HCT116 (cell line): ENCODE measurements at regions of chr7 and their contacts with region 1.

Region 1: GRCh38 chr7:24665564-24666294 is 91.5 kb downstream of the GSDME start:
- DNase-seq: peak; percentile 27
- ATAC-seq: peak; percentile 78
- H3K4me3 ChIP-seq: no peak overlapping the region
- H3K27ac ChIP-seq: no peak overlapping the region
- H3K4me1 ChIP-seq: 0 out of 4 replicates have a peak, but pooled peaks cover 0 to 7% of the 10 kb centered on the region in 2 experiments
- H3K27me3 ChIP-seq: no peaks in the 10 kb centered on the region
- CTCF ChIP-seq: peak; percentile 57 to 78 (median 58); a peak in 5 of 6 replicates
- POLR2A ChIP-seq: no peak
- RAD21 ChIP-seq: peak; percentile 76

Region 2: DNA sequence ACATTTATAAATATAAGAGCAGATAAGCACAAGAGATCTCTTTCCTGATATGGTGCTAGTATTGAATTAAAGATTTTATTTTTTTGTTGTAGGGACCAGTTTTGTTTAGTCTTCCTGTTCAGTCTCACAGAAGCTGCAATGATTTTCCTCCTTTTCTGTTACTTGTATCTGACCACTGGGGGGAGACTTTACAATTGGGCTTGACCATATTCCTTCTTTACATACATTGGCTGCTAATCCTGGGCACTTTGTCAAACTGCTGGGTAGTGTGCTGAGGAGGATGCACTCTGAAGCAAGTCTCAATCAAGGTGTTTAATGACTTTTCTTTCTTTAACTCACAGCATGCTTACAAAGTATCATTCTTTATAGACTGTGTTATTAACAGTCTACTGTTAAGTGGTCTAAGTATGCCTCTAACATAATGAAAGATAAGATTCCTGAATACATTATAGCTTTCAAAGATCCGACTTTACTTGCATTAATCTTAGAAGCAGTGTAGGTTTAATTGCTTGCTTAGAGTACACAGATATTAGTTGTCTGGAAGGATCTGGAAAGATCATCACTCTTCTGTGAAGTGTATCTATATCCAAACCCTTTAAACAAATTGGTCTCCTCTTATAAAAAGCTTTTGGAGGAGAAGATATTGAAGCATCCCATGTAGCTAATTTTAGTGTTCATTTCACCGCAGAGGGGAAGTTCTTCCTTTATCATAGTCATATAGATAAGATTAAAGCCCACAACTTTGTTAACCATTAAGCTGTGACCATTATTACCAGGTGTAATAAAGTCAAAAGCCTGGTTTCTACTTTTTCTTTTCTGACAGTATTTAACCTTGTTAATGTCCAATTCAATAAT is 89.3 kb before region 1 on chr7:
- CTCF ChIA-PET with region 1: interaction called, 6 read pairs
- POLR2A ChIA-PET with region 1: no interaction called
- RAD21 ChIA-PET with region 1: no interaction called
- intact Hi-C with region 1: loop called (anchors 2 kb)
- DNase-seq: peak; percentile 48
- ATAC-seq: 0 out of 2 replicates have a peak, but pooled peaks have one; percentile 18
- H3K4me3 ChIP-seq: no peak overlapping the region
- H3K27ac ChIP-seq: no peak overlapping the region
- H3K4me1 ChIP-seq: peaks cover 8 to 24% of the 10 kb centered on the region in 2 experiments; a peak in 3 of 4 replicates
- H3K27me3 ChIP-seq: no peaks in the 10 kb centered on the region
- CTCF ChIP-seq: peak; percentile 59 to 72 (median 67)
- POLR2A ChIP-seq: no peak
- RAD21 ChIP-seq: peak; percentile 62